Breast epithelium (tissue), 4 donors: ENCODE measurements at regions of chr10 and their contacts with region 1.

Region 1: DNA sequence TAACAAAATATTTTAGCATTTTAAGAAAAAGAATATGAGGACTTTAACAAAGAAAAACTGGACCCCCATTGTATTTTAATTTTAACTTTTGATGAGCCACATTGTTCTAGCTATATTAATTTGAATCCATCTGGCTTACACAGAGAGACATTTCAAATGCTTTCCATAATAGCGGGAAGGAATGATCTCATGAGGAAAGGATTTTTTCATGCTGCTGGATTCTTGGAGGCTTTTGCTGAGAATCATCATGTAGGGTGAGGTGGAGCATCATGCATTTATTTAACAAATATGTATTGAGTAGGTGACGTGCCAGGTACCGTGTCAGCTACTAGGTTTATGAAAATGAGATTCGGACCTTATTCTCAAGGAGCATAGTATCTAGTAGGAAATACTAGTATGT is 1006.3 kb downstream of the SORCS1 start:
- DNase-seq: no peak
- H3K4me3 ChIP-seq: no peak overlapping the region
- H3K27ac ChIP-seq: no peak overlapping the region
- H3K4me1 ChIP-seq: no peaks in the 10 kb centered on the region
- H3K27me3 ChIP-seq: no peaks in the 10 kb centered on the region
- CTCF ChIP-seq: no peak
- POLR2A ChIP-seq: no peak

Region 2: GRCh38 chr10:105679781-105680180 is 478.5 kb before region 1 on chr10:
- intact Hi-C with region 1: loop called (anchors 5 kb)
- DNase-seq: no peak
- H3K4me3 ChIP-seq: no peak overlapping the region
- H3K27ac ChIP-seq: no peak overlapping the region
- H3K4me1 ChIP-seq: no peaks in the 10 kb centered on the region
- H3K27me3 ChIP-seq: no peaks in the 10 kb centered on the region
- CTCF ChIP-seq: no peak
- POLR2A ChIP-seq: no peak

Region 3: GRCh38 chr10:106793617-106794016 is 635.4 kb after region 1 on chr10:
- intact Hi-C with region 1: loop called (anchors 5 kb)
- DNase-seq: no peak
- H3K4me3 ChIP-seq: no peak overlapping the region
- H3K27ac ChIP-seq: no peak overlapping the region
- H3K4me1 ChIP-seq: no peaks in the 10 kb centered on the region
- H3K27me3 ChIP-seq: no peaks in the 10 kb centered on the region
- CTCF ChIP-seq: no peak
- POLR2A ChIP-seq: no peak